HepG2 (cell line): ENCODE measurements at regions of chr5 and their contacts with region 1.

Region 1: DNA sequence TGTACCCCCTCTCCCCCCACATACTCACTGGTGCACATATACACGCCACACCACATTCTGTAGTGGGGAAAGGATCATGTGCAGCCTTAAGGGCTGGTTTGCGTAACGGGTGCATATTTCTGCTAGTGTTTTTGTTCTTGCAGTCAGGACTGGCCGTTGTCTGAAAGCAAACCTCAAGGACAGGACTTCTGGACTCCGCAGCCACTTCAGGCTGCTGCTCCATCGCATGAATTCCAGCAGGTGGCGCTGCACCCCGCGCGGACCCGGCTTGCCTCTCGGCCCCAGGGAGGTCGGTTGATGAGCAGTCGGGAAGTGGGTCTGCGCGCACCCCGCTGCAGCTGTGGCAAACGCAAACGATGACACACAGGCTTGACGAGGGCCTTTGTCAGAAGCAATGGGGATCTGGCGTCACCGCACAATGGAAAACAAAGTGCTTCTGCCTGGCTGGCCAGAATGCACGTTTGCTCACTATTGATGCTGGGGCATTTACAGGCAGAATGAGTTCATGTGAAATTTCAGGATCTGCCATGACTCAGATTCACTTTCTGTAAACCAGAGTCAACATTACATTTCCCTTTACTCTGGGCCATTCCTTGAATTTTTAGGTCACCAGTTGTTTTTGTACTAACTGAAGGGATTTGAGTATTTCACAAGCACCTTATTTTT is 36.3 kb upstream of the GLRX start:
- DNase-seq: peak; percentile 90
- ATAC-seq: peak; percentile 75
- H3K4me3 ChIP-seq: peak overlapping the region; percentile 10 to 47 (median 32); a peak in 4 of 6 replicates
- H3K27ac ChIP-seq: peak overlapping the region; percentile 71
- H3K4me1 ChIP-seq: peaks cover 76% of the 10 kb centered on the region
- H3K27me3 ChIP-seq: no peaks in the 10 kb centered on the region
- CTCF ChIP-seq: peak; percentile 100
- EP300 ChIP-seq: peak in 1 of 2 experiments; percentile 63; a peak in 1 of 4 replicates
- POLR2A ChIP-seq: peak; percentile 28 to 51; a peak in 2 of 4 replicates
- RAD21 ChIP-seq: peak; percentile 99

Region 2: GRCh38 chr5:95846554-95847260 is 12.1 kb before region 1 on chr5:
- CTCF ChIA-PET with region 1: no interaction called
- POLR2A ChIA-PET with region 1: no interaction called
- in situ Hi-C with region 1: no loop called
- intact Hi-C with region 1: no loop called
- DNase-seq: peak; percentile 63
- ATAC-seq: peak; percentile 69
- H3K4me3 ChIP-seq: no peak overlapping the region
- H3K27ac ChIP-seq: no peak overlapping the region
- H3K4me1 ChIP-seq: peaks cover 45% of the 10 kb centered on the region
- H3K27me3 ChIP-seq: no peaks in the 10 kb centered on the region
- CTCF ChIP-seq: peak; percentile 92
- EP300 ChIP-seq: no peak
- POLR2A ChIP-seq: no peak
- RAD21 ChIP-seq: peak; percentile 84

Region 3: GRCh38 chr5:95870105-95870672 is 11.4 kb after region 1 on chr5:
- CTCF ChIA-PET with region 1: no interaction called
- POLR2A ChIA-PET with region 1: interaction called, 12 read pairs
- in situ Hi-C with region 1: no loop called
- intact Hi-C with region 1: no loop called
- DNase-seq: peak; percentile 54
- ATAC-seq: no peak; the same call in 2 of the 3 replicates
- H3K4me3 ChIP-seq: no peak overlapping the region
- H3K27ac ChIP-seq: peak overlapping the region; percentile 21
- H3K4me1 ChIP-seq: peaks cover 65% of the 10 kb centered on the region
- H3K27me3 ChIP-seq: no peaks in the 10 kb centered on the region
- CTCF ChIP-seq: no peak
- EP300 ChIP-seq: no peak
- POLR2A ChIP-seq: no peak
- RAD21 ChIP-seq: no peak

Region 4: GRCh38 chr5:95878417-95879323 is 19.9 kb after region 1 on chr5:
- CTCF ChIA-PET with region 1: no interaction called
- POLR2A ChIA-PET with region 1: interaction called, 128 read pairs
- in situ Hi-C with region 1: no loop called
- intact Hi-C with region 1: no loop called
- DNase-seq: peak; percentile 95
- ATAC-seq: peak; percentile 79
- H3K4me3 ChIP-seq: peak overlapping the region; percentile 24 to 60 (median 24); a peak in 4 of 6 replicates
- H3K27ac ChIP-seq: peak overlapping the region; percentile 96
- H3K4me1 ChIP-seq: peaks cover 83% of the 10 kb centered on the region
- H3K27me3 ChIP-seq: no peaks in the 10 kb centered on the region
- CTCF ChIP-seq: peak; percentile 19; the same call in 1 of the 2 replicates
- EP300 ChIP-seq: peak in 1 of 2 experiments; percentile 86; a peak in 2 of 4 replicates
- POLR2A ChIP-seq: peak; percentile 41 to 54; a peak in 2 of 4 replicates
- RAD21 ChIP-seq: no peak

Region 5: DNA sequence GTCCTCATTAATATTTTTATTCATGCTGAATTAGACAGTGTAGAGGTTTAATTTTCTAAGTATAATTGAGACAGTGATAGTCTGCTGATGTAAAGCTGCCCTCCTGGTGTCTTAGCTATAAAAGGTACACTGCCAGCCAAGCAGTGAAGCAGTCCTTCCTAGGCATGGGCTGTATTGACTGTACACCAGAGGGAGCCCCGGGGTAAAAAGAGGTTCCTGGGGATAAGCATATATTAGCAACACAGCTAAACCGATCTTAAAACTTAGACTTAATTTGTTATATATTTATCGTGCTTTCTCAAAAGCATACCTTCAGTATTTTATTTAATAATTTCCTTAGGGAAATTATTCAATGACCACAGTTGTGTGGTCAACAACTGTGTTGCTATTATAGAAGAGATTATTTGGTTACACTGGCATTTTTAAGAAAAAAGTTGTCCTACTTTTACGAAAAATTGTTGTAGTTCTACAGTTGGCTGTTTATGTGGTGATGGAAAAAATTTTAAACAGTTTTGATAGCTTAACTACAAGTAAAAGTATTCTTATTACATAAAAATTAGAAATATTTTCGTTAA is 34.1 kb after region 1 on chr5:
- CTCF ChIA-PET with region 1: interaction called, 5 read pairs
- POLR2A ChIA-PET with region 1: interaction called, 7 read pairs
- in situ Hi-C with region 1: no loop called
- intact Hi-C with region 1: loop called (anchors 2 kb)
- DNase-seq: peak; percentile 48
- ATAC-seq: peak; percentile 76
- H3K4me3 ChIP-seq: no peak overlapping the region
- H3K27ac ChIP-seq: no peak overlapping the region
- H3K4me1 ChIP-seq: peaks cover 53% of the 10 kb centered on the region
- H3K27me3 ChIP-seq: no peaks in the 10 kb centered on the region
- CTCF ChIP-seq: peak; percentile 59
- EP300 ChIP-seq: no peak
- POLR2A ChIP-seq: no peak
- RAD21 ChIP-seq: peak; percentile 72

Region 6: GRCh38 chr5:95907067-95907705 is 48.4 kb after region 1 on chr5:
- CTCF ChIA-PET with region 1: no interaction called
- POLR2A ChIA-PET with region 1: interaction called, 3 read pairs
- in situ Hi-C with region 1: no loop called
- intact Hi-C with region 1: loop called (anchors 5 kb)
- DNase-seq: no peak
- ATAC-seq: no peak
- H3K4me3 ChIP-seq: no peak overlapping the region
- H3K27ac ChIP-seq: peak overlapping the region; percentile 68
- H3K4me1 ChIP-seq: peaks cover 63% of the 10 kb centered on the region
- H3K27me3 ChIP-seq: no peaks in the 10 kb centered on the region
- CTCF ChIP-seq: no peak
- EP300 ChIP-seq: no peak
- POLR2A ChIP-seq: no peak
- RAD21 ChIP-seq: no peak

Region 7: DNA sequence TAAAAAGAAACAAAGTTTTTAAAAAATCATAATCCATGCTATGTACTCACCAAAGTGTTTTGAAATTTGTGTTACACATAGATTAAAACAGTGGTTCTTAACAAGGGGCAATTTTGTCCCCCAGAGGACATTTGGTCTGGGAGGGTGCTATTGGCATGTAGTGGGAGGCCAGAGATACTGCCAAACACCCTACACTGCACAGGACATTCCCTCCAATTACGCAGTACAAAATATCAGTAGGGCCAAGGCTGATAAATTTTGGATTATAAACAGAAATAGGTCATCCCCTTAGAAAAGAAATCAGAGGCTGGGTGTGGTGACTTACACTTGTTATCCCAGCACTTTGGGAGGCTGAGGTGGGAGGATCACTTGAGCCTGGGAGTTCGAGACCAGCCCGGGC is 64.0 kb after region 1 on chr5:
- CTCF ChIA-PET with region 1: no interaction called
- POLR2A ChIA-PET with region 1: no interaction called
- in situ Hi-C with region 1: no loop called
- intact Hi-C with region 1: no loop called
- DNase-seq: no peak
- ATAC-seq: no peak
- H3K4me3 ChIP-seq: no peak overlapping the region
- H3K27ac ChIP-seq: no peak overlapping the region
- H3K4me1 ChIP-seq: peaks cover 95% of the 10 kb centered on the region
- H3K27me3 ChIP-seq: no peaks in the 10 kb centered on the region
- CTCF ChIP-seq: no peak
- EP300 ChIP-seq: no peak
- POLR2A ChIP-seq: no peak
- RAD21 ChIP-seq: no peak

Region 8: DNA sequence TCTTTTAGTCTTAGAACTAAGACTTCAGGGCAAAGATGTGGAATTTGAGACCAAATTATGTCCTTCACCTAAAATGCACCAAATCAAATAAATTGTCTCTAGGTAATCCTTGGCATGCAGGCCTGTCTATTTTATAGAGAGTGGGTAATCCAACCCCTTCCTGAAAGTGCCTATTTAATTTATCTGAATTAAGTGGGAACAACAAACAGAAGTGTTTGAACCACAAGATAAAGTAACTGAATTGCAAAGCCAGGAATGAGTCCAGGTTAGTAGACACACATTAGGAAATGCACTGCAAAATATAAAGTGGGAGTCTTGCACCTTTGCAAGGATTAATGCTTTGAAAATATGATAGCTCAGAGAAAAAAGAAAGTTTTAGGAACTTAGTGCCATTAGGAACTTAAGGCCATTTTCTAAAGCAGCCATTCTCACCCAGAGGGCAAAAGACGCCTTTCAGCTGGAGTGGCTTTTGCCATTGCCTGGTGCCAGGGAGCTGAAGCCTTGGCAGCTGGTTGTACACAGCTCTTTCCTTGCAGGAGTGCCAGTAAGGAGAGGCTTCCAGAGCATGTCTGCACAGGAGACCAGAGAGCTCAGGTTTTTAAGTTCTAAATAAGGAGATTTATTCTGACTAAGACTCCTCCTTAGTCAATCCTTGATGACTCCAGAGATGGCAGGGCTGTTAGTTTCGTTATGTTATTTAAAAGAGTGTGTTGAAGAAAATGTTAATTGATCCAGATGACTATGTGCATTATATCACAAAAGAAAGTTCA is 254.6 kb after region 1 on chr5:
- CTCF ChIA-PET with region 1: no interaction called
- POLR2A ChIA-PET with region 1: interaction called, 9 read pairs
- in situ Hi-C with region 1: loop called (anchors 5 kb)
- intact Hi-C with region 1: loop called (anchors 5 kb)
- DNase-seq: no peak
- ATAC-seq: no peak
- H3K4me3 ChIP-seq: no peak overlapping the region
- H3K27ac ChIP-seq: no peak overlapping the region
- H3K4me1 ChIP-seq: peaks cover 89% of the 10 kb centered on the region
- H3K27me3 ChIP-seq: no peaks in the 10 kb centered on the region
- CTCF ChIP-seq: no peak
- EP300 ChIP-seq: no peak
- POLR2A ChIP-seq: no peak
- RAD21 ChIP-seq: no peak

Region 9: GRCh38 chr5:96187309-96188027 is 328.7 kb after region 1 on chr5:
- CTCF ChIA-PET with region 1: no interaction called
- POLR2A ChIA-PET with region 1: no interaction called
- in situ Hi-C with region 1: no loop called
- intact Hi-C with region 1: loop called (anchors 5 kb)
- DNase-seq: peak; percentile 93
- ATAC-seq: peak; percentile 98
- H3K4me3 ChIP-seq: no peak overlapping the region; a peak in 1 of 6 replicates
- H3K27ac ChIP-seq: peak overlapping the region; percentile 61
- H3K4me1 ChIP-seq: peaks cover 47% of the 10 kb centered on the region
- H3K27me3 ChIP-seq: no peaks in the 10 kb centered on the region
- CTCF ChIP-seq: no peak
- EP300 ChIP-seq: peak; percentile 13 to 81; a peak in 2 of 4 replicates
- POLR2A ChIP-seq: no peak
- RAD21 ChIP-seq: no peak; the same call in 1 of the 2 replicates